BJ (cell line): ENCODE measurements at regions of chr10 and their contacts with region 1.

Region 1: DNA sequence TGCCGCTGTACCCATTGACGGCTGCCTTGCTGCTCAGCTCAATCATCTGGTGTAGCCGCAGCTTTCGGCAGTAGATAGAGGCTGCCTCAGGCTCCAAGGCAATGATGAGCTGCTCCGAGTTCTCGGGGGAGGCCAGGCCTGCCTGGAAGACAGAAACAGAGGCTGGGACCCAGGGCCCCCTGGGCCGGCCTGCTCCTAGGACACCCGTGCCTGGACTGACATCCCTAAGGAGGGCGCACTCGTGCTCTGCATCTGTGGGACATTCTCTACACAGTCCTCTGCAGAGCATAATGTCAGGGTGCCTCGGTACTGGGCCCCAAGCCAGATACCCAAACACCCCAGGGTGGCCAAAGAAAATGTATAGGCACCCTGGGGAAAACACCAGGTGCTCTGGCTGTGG is 58.5 kb downstream of the HSPA12A start:
- DNase-seq: no peak
- H3K4me3 ChIP-seq: no peak overlapping the region
- H3K27me3 ChIP-seq: no peaks in the 10 kb centered on the region
- CTCF ChIP-seq: no peak

Region 2: GRCh38 chr10:116771101-116771958 is 87.5 kb after region 1 on chr10:
- CTCF ChIA-PET with region 1: interaction called, 21 read pairs
- POLR2A ChIA-PET with region 1: no interaction called
- DNase-seq: peak; percentile 47
- H3K4me3 ChIP-seq: no peak overlapping the region
- H3K27me3 ChIP-seq: no peaks in the 10 kb centered on the region; the same call in 1 of the 2 replicates
- CTCF ChIP-seq: 0 out of 2 replicates have a peak, but pooled peaks have one; percentile 5

Region 3: GRCh38 chr10:116779076-116779687 is 95.4 kb after region 1 on chr10:
- CTCF ChIA-PET with region 1: interaction called, 335 read pairs
- POLR2A ChIA-PET with region 1: no interaction called
- DNase-seq: no peak
- H3K4me3 ChIP-seq: no peak overlapping the region
- H3K27me3 ChIP-seq: no peaks in the 10 kb centered on the region; the same call in 1 of the 2 replicates
- CTCF ChIP-seq: no peak